CD4-positive, alpha-beta T cell (primary cell): ENCODE measurements at regions of chr1 and their contacts with region 1.

Region 1: GRCh38 chr1:171397851-171398469 is 84.0 kb downstream of the FMO4 start:
- DNase-seq: no peak
- ATAC-seq: no peak
- H3K4me3 ChIP-seq: no peak overlapping the region
- H3K4me3 Mint-ChIP-seq: no peak overlapping the region
- H3K27ac ChIP-seq: no peak overlapping the region
- H3K27ac Mint-ChIP-seq: no peak overlapping the region
- H3K4me1 ChIP-seq: no peaks in the 10 kb centered on the region
- H3K4me1 Mint-ChIP-seq: no peaks in the 10 kb centered on the region
- H3K27me3 ChIP-seq: no peaks in the 10 kb centered on the region
- H3K27me3 Mint-ChIP-seq: peaks cover 22% of the 10 kb centered on the region
- CTCF ChIP-seq: no peak

Region 2: DNA sequence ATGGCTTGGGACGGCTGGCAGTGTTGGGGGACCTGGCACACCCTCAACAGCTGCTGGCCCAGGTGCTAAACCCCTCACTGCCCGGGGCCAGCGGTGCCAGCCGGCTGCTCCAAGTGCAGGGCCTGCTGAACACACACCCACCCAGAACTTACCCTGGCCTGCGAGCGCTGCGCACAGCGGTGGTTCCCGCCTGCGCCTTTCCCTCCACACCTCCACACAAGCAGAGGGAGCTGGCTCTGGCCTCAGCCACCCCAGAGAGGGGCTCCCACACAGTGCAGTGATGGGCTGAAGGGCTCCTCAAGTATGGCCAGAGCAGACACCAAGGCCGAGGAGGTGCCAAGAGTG is 16.1 kb before region 1 on chr1:
- CTCF ChIA-PET with region 1: no interaction called
- POLR2A ChIA-PET with region 1: no interaction called
- intact Hi-C with region 1: no loop called
- DNase-seq: no peak
- ATAC-seq: no peak
- H3K4me3 ChIP-seq: no peak overlapping the region
- H3K4me3 Mint-ChIP-seq: no peak overlapping the region
- H3K27ac ChIP-seq: no peak overlapping the region
- H3K27ac Mint-ChIP-seq: no peak overlapping the region
- H3K4me1 ChIP-seq: no peaks in the 10 kb centered on the region
- H3K4me1 Mint-ChIP-seq: no peaks in the 10 kb centered on the region
- H3K27me3 ChIP-seq: no peaks in the 10 kb centered on the region
- H3K27me3 Mint-ChIP-seq: peaks cover 6% of the 10 kb centered on the region
- CTCF ChIP-seq: no peak

Region 3: GRCh38 chr1:171422511-171422910 is 24.6 kb after region 1 on chr1:
- CTCF ChIA-PET with region 1: no interaction called
- POLR2A ChIA-PET with region 1: no interaction called
- intact Hi-C with region 1: no loop called
- DNase-seq: no peak
- ATAC-seq: no peak
- H3K4me3 ChIP-seq: no peak overlapping the region
- H3K4me3 Mint-ChIP-seq: no peak overlapping the region
- H3K27ac ChIP-seq: no peak overlapping the region
- H3K27ac Mint-ChIP-seq: no peak overlapping the region
- H3K4me1 ChIP-seq: peaks cover 13% of the 10 kb centered on the region
- H3K4me1 Mint-ChIP-seq: peaks cover 26% of the 10 kb centered on the region
- H3K27me3 ChIP-seq: no peaks in the 10 kb centered on the region
- H3K27me3 Mint-ChIP-seq: no peaks in the 10 kb centered on the region
- CTCF ChIP-seq: no peak

Region 4: GRCh38 chr1:171457412-171457811 is 59.5 kb after region 1 on chr1:
- CTCF ChIA-PET with region 1: no interaction called
- POLR2A ChIA-PET with region 1: no interaction called
- intact Hi-C with region 1: no loop called
- DNase-seq: no peak
- ATAC-seq: no peak
- H3K4me3 ChIP-seq: no peak overlapping the region
- H3K4me3 Mint-ChIP-seq: no peak overlapping the region
- H3K27ac ChIP-seq: no peak overlapping the region
- H3K27ac Mint-ChIP-seq: no peak overlapping the region
- H3K4me1 ChIP-seq: no peaks in the 10 kb centered on the region
- H3K4me1 Mint-ChIP-seq: no peaks in the 10 kb centered on the region
- H3K27me3 ChIP-seq: peaks cover 2 to 3% of the 10 kb centered on the region in 2 experiments
- H3K27me3 Mint-ChIP-seq: peaks cover 12% of the 10 kb centered on the region
- CTCF ChIP-seq: no peak

Region 5: GRCh38 chr1:173082913-173083312 is 1685.0 kb after region 1 on chr1:
- CTCF ChIA-PET with region 1: no interaction called
- POLR2A ChIA-PET with region 1: no interaction called
- intact Hi-C with region 1: loop called in 1 of 2 experiments (anchors 5 kb)
- DNase-seq: no peak
- ATAC-seq: no peak
- H3K4me3 ChIP-seq: no peak overlapping the region
- H3K4me3 Mint-ChIP-seq: no peak overlapping the region
- H3K27ac ChIP-seq: no peak overlapping the region
- H3K27ac Mint-ChIP-seq: no peak overlapping the region
- H3K4me1 ChIP-seq: no peaks in the 10 kb centered on the region
- H3K4me1 Mint-ChIP-seq: no peaks in the 10 kb centered on the region
- H3K27me3 ChIP-seq: no peaks in the 10 kb centered on the region
- H3K27me3 Mint-ChIP-seq: no peaks in the 10 kb centered on the region
- CTCF ChIP-seq: no peak